Activated CD4-positive, alpha-beta T cell treated with anti-CD3 and anti-CD28 coated beads, Interleukin-2, amount 10 ng/mL, durations not matched to agents 24 days and 14 days (primary cell): ENCODE measurements at regions of chr1 and their contacts with region 1.

Region 1: DNA sequence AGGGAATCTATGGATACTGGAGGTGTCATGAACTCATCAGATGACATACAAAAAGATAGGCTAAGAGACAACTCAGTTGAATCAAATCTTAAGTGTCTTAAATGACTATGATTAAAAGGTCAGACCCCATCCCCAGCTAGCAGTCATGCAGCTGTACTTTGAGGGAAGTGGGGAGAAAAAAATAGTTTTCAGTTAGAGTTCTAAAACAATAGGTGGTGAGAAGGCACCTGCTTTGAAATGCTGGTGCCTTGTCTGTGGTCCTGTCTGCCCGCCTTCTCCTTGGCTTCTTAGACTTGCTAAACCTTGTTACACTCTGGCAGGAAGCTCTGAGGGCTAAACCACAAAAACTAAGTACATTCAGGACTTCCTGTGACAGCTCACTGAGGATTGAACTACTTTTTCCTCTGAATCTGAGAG is 15.3 kb downstream of the CD2 start:
- DNase-seq: peak; percentile 93
- H3K4me3 Mint-ChIP-seq: peak overlapping the region; percentile 98
- H3K27ac Mint-ChIP-seq: peak overlapping the region; percentile 99
- H3K4me1 Mint-ChIP-seq: peaks cover 83% of the 10 kb centered on the region
- H3K27me3 Mint-ChIP-seq: no peaks in the 10 kb centered on the region

Region 2: GRCh38 chr1:116754198-116754977 is 15.2 kb before region 1 on chr1 and contains the start of gene CD2:
- intact Hi-C with region 1: loop called (anchors 1 kb)
- DNase-seq: peak; percentile 89
- H3K4me3 Mint-ChIP-seq: peak within 1 kb of the TSS; percentile 98
- H3K27ac Mint-ChIP-seq: peak within 1 kb of the TSS; percentile 97
- H3K4me1 Mint-ChIP-seq: peaks cover 27% of the 10 kb centered on the region
- H3K27me3 Mint-ChIP-seq: no peaks in the 10 kb centered on the region
- total RNA-seq, gene CD2: 500 and 501 TPM in 2 replicates

Region 3: GRCh38 chr1:116806245-116806644 is 36.7 kb after region 1 on chr1:
- intact Hi-C with region 1: loop called (anchors 1 kb)
- DNase-seq: peak; percentile 83
- H3K4me3 Mint-ChIP-seq: peak overlapping the region; percentile 79
- H3K27ac Mint-ChIP-seq: peak overlapping the region; percentile 95
- H3K4me1 Mint-ChIP-seq: peaks cover 84% of the 10 kb centered on the region
- H3K27me3 Mint-ChIP-seq: no peaks in the 10 kb centered on the region

Region 4: GRCh38 chr1:116817582-116818064 is 48.1 kb after region 1 on chr1:
- intact Hi-C with region 1: loop called (anchors 1 kb)
- DNase-seq: peak; percentile 90
- H3K4me3 Mint-ChIP-seq: peak overlapping the region; percentile 62
- H3K27ac Mint-ChIP-seq: peak overlapping the region; percentile 89
- H3K4me1 Mint-ChIP-seq: peaks cover 48% of the 10 kb centered on the region
- H3K27me3 Mint-ChIP-seq: no peaks in the 10 kb centered on the region

Region 5: DNA sequence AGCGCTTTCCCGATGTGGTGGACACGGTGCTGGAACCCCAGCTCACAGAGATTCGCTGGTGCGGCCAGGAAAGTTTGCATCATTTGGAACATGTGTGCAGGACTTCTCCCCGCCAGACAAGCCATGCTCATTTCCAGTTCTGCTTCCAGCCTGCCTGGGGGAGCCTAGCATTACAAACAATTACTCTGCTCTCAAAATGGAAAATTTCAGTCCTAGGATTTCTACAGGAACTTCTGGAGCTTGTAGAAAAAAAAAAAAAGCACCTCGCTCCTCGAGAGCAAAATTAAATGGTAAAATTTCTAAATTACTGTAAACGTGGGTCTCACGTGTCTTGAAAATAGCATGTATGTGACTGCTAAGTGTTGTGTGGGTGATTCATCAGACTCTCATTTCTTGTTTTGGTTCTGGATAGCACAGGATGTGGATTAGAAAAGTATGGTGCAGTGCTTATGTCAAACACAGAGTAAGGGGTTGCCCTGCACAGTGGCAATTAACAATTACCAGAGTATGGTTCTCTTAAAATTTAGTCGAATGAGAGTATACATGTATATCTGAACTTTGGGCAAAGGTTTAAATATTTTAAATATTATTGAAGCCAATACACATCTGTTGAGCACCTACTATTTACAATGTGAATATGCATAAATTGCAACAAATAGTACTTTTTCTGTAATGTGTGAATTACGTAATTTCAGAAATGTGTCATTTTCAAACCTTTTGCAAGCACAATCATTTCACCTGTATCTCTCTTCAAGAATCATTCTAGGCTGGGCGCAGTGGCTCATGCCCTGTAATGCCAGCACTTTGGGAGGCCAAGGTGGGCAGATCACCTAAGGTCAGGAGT is 78.3 kb after region 1 on chr1:
- intact Hi-C with region 1: loop called (anchors 1 kb)
- DNase-seq: peak; percentile 71
- H3K4me3 Mint-ChIP-seq: peak overlapping the region; percentile 44
- H3K27ac Mint-ChIP-seq: peak overlapping the region; percentile 61
- H3K4me1 Mint-ChIP-seq: peaks cover 23% of the 10 kb centered on the region
- H3K27me3 Mint-ChIP-seq: no peaks in the 10 kb centered on the region

Region 6: GRCh38 chr1:116873680-116874271 is 104.2 kb after region 1 on chr1:
- intact Hi-C with region 1: loop called (anchors 1 kb)
- DNase-seq: peak; percentile 68
- H3K4me3 Mint-ChIP-seq: no peak overlapping the region
- H3K27ac Mint-ChIP-seq: peak overlapping the region; percentile 22
- H3K4me1 Mint-ChIP-seq: peaks cover 19% of the 10 kb centered on the region
- H3K27me3 Mint-ChIP-seq: no peaks in the 10 kb centered on the region

Region 7: DNA sequence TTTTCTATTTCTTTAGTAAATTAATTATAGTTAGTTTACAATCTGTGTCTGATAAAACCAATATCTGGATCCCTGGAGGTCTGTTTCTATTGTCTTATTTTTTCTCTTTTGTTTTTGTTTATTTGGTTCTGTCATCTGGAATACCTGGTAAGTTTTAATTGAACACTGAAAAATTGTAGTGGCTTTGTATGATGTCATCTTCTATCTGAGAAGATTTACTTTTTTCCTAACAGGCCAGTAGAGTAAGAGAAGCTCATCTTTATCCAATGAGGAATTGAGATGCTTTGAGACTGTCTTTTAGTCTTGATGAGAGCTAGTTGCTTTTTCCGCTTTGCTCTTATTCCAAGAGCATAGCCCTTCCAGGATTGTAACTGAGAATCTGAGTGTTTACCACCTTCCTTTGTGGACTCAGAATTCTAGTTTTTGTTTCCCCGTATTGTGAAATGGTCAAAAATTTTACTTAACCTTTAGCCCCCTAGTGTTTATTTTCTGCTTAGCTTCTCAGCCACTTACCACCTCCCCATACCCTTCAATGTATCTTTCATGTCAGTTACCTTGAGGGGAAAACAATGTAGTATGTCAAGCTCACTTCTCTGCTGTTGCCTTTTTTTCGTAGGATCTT is 165.1 kb after region 1 on chr1:
- intact Hi-C with region 1: loop called (anchors 2 kb)
- DNase-seq: no peak
- H3K4me3 Mint-ChIP-seq: peak overlapping the region; percentile 36
- H3K27ac Mint-ChIP-seq: peak overlapping the region; percentile 74
- H3K4me1 Mint-ChIP-seq: peaks cover 28% of the 10 kb centered on the region
- H3K27me3 Mint-ChIP-seq: no peaks in the 10 kb centered on the region